ENCODE measurements at regions of chr22 and their contacts with region 1.

Region 1: GRCh38 chr22:36110306-36110881 is 50.2 kb downstream of the APOL3 start:
- DNase-seq: no peak
- H3K4me3 ChIP-seq: no peak overlapping the region
- H3K27ac ChIP-seq: no peak overlapping the region
- H3K4me1 ChIP-seq: peaks cover 0 to 11% (median 8%) of the 10 kb centered on the region in 4 donors
- H3K27me3 ChIP-seq: no peaks in the 10 kb centered on the region
- CTCF ChIP-seq: no peak

Region 2: DNA sequence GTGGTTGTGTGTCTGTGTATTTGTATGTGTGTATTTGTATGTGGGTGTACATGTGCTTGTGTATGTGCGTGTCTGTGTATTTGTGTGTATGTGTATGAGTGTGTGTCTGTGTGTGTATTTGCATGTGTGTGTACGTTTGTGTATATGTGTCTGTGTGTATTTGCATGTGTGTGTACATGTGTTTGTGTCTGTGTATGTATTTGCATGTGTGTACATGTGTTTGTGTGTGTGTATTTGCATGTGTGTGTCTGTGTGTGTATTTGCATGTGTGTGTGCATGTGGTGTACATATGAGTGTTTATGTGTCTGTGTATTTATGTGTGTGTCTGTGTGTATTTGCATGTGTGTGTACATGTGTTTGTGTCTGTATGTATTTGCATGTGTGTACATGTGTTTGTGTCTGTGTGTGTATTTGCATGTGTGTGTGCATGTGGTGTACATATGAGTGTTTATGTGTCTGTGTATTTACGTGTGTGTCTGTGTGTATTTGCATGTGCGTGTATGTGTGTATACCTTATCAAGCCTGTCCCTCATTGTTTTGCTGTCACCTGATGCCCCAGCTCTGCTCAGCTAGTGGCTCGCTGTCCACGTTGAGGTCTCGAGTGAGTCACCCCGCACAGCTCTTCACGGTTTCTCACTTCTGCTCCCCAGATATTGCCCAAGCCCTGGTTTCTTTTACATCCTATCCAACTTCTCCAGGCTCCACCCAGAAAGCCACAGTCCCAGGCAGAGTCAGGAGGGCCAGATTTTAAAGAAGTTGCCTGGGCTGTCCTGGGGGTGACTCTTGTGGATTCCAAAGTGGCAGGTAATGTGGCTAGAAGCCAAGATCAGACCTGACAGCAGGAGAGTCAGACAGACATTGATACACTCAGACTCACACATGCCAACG is 508.4 kb before region 1 on chr22:
- intact Hi-C with region 1: loop called (anchors 10 kb)
- DNase-seq: peak in 1 of 2 donors; percentile 41
- H3K4me3 ChIP-seq: no peak overlapping the region
- H3K27ac ChIP-seq: no peak overlapping the region
- H3K4me1 ChIP-seq: peaks cover 0 to 14% (median 12%) of the 10 kb centered on the region in 4 donors
- H3K27me3 ChIP-seq: no peaks in the 10 kb centered on the region
- CTCF ChIP-seq: no peak

Region 3: DNA sequence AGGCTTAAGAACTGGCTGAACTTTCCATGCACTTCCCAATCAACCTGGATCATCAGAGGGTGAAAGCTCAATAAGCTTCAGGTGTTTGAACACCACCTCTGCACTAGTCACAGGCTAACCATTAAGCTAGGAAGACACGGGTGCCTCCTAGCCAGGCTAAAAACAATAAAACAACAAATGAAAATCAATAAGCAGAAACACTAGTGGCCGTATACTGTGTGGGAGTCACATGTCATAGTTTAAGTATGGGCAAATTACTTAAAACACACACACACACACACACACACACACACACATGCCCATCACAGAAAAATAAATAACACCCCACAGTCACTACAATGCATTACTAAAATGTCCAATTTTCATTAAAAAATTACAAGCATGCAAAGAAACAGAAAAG is 307.5 kb before region 1 on chr22:
- intact Hi-C with region 1: no loop called
- DNase-seq: no peak
- H3K4me3 ChIP-seq: no peak overlapping the region
- H3K27ac ChIP-seq: no peak overlapping the region
- H3K4me1 ChIP-seq: peaks cover 0 to 10% (median 4%) of the 10 kb centered on the region in 4 donors
- H3K27me3 ChIP-seq: no peaks in the 10 kb centered on the region
- CTCF ChIP-seq: no peak